ENCODE measurements at regions of chr12 and their contacts with region 1.

Region 1: GRCh38 chr12:54749191-54749818 is 101.1 kb upstream of the DCD start:
- DNase-seq: no peak
- H3K4me3 ChIP-seq: no peak overlapping the region
- H3K27ac ChIP-seq: no peak overlapping the region
- H3K4me1 ChIP-seq: no peaks in the 10 kb centered on the region
- H3K27me3 ChIP-seq: no peaks in the 10 kb centered on the region
- CTCF ChIP-seq: peak in 2 of 3 experiments; percentile 52 to 71; a peak in 2 of 4 replicates
- EP300 ChIP-seq: no peak
- POLR2A ChIP-seq: no peak
- RAD21 ChIP-seq: peak; percentile 79 to 81

Region 2: DNA sequence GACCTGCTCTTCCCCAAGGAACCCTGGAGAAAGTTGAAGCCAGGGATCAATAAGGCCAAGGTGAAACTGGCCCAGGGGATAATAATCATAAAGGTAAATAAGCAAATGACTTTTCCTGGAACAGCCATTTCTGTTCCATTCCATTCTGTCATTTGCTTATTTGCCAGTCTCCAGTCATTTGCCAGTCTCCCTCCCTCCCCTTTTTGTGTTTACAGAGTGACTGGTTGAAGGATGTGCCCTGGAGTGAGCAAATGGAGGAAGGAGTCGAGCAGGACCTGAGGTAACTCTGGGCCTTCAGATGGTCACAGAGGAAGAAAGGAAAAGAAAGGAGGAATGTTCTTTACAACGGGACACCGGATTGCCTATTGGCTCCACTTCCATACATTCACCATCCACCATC is 83.3 kb before region 1 on chr12:
- CTCF ChIA-PET with region 1: no interaction called
- POLR2A ChIA-PET with region 1: no interaction called
- DNase-seq: no peak
- H3K4me3 ChIP-seq: no peak overlapping the region
- H3K27ac ChIP-seq: no peak overlapping the region
- H3K4me1 ChIP-seq: no peaks in the 10 kb centered on the region
- H3K27me3 ChIP-seq: no peaks in the 10 kb centered on the region; a peak in 1 of 7 replicates
- CTCF ChIP-seq: no peak
- EP300 ChIP-seq: no peak
- POLR2A ChIP-seq: no peak
- RAD21 ChIP-seq: no peak

Region 3: GRCh38 chr12:54716261-54716660 is 33.0 kb before region 1 on chr12:
- CTCF ChIA-PET with region 1: interaction called, 15 read pairs
- POLR2A ChIA-PET with region 1: no interaction called
- DNase-seq: no peak
- H3K4me3 ChIP-seq: no peak overlapping the region
- H3K27ac ChIP-seq: no peak overlapping the region
- H3K4me1 ChIP-seq: peaks cover 0 to 9% (median 2%) of the 10 kb centered on the region in 4 experiments; a peak in 2 of 7 replicates
- H3K27me3 ChIP-seq: no peaks in the 10 kb centered on the region
- CTCF ChIP-seq: no peak
- EP300 ChIP-seq: no peak
- POLR2A ChIP-seq: no peak
- RAD21 ChIP-seq: no peak

Region 4: GRCh38 chr12:54723379-54724256 is 25.7 kb before region 1 on chr12:
- CTCF ChIA-PET with region 1: interaction called, 15 read pairs
- POLR2A ChIA-PET with region 1: no interaction called
- DNase-seq: no peak
- H3K4me3 ChIP-seq: no peak overlapping the region
- H3K27ac ChIP-seq: no peak overlapping the region
- H3K4me1 ChIP-seq: peaks cover 0 to 5% (median 3%) of the 10 kb centered on the region in 4 experiments; a peak in 2 of 7 replicates
- H3K27me3 ChIP-seq: no peaks in the 10 kb centered on the region
- CTCF ChIP-seq: peak in 2 of 3 experiments; percentile 59 to 68; a peak in 3 of 4 replicates
- EP300 ChIP-seq: no peak
- POLR2A ChIP-seq: no peak
- RAD21 ChIP-seq: peak; percentile 21 to 39; a peak in 3 of 4 replicates

Region 5: DNA sequence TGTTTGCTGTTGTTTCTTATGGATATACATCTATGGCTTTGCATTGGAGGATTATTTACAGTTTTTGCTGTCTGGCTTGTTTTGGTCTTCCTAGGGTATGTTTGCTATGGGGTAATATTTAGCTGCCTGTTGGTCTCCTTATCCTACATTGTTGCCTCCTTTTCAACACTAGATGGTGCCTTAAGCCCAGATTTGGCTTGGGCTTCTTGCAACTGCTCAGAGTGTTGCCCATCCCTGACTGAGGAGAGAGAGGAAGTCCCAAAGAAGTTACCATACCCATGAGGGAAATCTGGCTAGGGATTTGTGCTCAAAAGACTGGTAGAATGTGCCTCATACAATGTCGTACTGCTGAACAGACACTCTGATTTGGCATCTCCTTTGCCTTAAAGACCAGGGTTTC is 10.4 kb after region 1 on chr12:
- CTCF ChIA-PET with region 1: interaction called, 31 read pairs
- POLR2A ChIA-PET with region 1: no interaction called
- DNase-seq: peak; percentile 25 to 44
- H3K4me3 ChIP-seq: no peak overlapping the region
- H3K27ac ChIP-seq: no peak overlapping the region
- H3K4me1 ChIP-seq: no peaks in the 10 kb centered on the region
- H3K27me3 ChIP-seq: no peaks in the 10 kb centered on the region
- CTCF ChIP-seq: peak in 2 of 3 experiments; percentile 73 to 90; a peak in 3 of 4 replicates
- EP300 ChIP-seq: no peak
- POLR2A ChIP-seq: no peak
- RAD21 ChIP-seq: peak; percentile 93 to 97

Region 6: DNA sequence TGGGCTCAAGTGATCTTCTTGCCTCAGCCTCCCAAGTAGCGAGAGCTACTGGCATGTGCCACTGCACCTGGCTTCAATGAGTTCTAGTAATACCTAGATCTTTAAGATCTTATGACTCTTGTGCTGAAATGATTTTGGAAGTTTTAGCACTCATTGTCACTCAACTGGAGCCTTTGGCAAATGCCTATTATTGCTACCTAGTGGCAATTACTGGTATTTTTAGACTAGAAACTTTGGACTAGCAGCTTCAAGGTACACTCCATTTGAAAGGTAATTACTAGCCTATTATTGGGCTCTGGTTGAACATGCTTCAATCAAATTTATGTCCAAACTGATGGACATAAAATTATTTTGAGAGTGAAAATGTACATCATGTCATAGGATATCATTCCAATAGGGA is 24.3 kb after region 1 on chr12:
- CTCF ChIA-PET with region 1: no interaction called
- POLR2A ChIA-PET with region 1: no interaction called
- DNase-seq: no peak
- H3K4me3 ChIP-seq: no peak overlapping the region
- H3K27ac ChIP-seq: no peak overlapping the region
- H3K4me1 ChIP-seq: no peaks in the 10 kb centered on the region
- H3K27me3 ChIP-seq: no peaks in the 10 kb centered on the region
- CTCF ChIP-seq: peak in 1 of 3 experiments; percentile 7; a peak in 1 of 4 replicates
- EP300 ChIP-seq: no peak
- POLR2A ChIP-seq: no peak
- RAD21 ChIP-seq: no peak

Region 7: DNA sequence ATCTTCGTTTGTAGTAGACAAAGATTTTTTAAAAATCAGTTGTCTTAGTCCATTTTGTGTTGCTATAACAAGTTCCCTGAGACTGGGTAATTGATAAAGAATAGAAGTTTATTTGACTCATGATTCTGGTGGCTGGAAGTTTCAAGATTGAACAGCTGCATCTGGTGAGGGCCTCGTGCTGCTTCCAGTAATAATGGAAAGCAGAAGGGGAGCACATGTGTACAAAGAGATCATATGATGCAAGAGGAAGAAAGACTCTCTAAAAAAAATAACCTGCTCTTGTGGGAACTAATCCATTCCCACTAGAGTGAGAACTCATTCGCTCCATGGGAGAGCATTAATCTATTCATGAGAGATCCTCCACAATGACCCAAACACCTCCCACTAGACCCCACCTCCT is 129.8 kb after region 1 on chr12:
- CTCF ChIA-PET with region 1: no interaction called
- POLR2A ChIA-PET with region 1: no interaction called
- DNase-seq: no peak
- H3K4me3 ChIP-seq: no peak overlapping the region
- H3K27ac ChIP-seq: no peak overlapping the region
- H3K4me1 ChIP-seq: no peaks in the 10 kb centered on the region
- H3K27me3 ChIP-seq: no peaks in the 10 kb centered on the region
- CTCF ChIP-seq: no peak
- EP300 ChIP-seq: no peak
- POLR2A ChIP-seq: no peak
- RAD21 ChIP-seq: no peak

Region 8: GRCh38 chr12:54984658-54985376 is 235.5 kb after region 1 on chr12 and contains the start of gene TESPA1:
- CTCF ChIA-PET with region 1: interaction called, 10 read pairs
- POLR2A ChIA-PET with region 1: no interaction called
- DNase-seq: no peak
- H3K4me3 ChIP-seq: no peak within 1 kb of the TSS
- H3K27ac ChIP-seq: no peak within 1 kb of the TSS
- H3K4me1 ChIP-seq: no peaks in the 10 kb centered on the region
- H3K27me3 ChIP-seq: no peaks in the 10 kb centered on the region
- CTCF ChIP-seq: no peak
- EP300 ChIP-seq: no peak
- POLR2A ChIP-seq: no peak
- RAD21 ChIP-seq: no peak
- total RNA-seq, gene TESPA1: not detected in 2 replicates